ENCODE measurements at regions of chr14 and their contacts with region 1.

Region 1: GRCh38 chr14:68788996-68789820 is 3.7 kb downstream of the ZFP36L1 start:
- DNase-seq: peak; percentile 51 to 93 (median 85)
- ATAC-seq: peak; percentile 12
- H3K4me3 ChIP-seq: peak overlapping the region; percentile 78 to 81
- H3K27ac ChIP-seq: peak overlapping the region; percentile 100
- H3K4me1 ChIP-seq: peaks cover 27 to 58% of the 10 kb centered on the region in 2 donors
- H3K27me3 ChIP-seq: no peaks in the 10 kb centered on the region
- CTCF ChIP-seq: peak; percentile 45 to 66

Region 2: DNA sequence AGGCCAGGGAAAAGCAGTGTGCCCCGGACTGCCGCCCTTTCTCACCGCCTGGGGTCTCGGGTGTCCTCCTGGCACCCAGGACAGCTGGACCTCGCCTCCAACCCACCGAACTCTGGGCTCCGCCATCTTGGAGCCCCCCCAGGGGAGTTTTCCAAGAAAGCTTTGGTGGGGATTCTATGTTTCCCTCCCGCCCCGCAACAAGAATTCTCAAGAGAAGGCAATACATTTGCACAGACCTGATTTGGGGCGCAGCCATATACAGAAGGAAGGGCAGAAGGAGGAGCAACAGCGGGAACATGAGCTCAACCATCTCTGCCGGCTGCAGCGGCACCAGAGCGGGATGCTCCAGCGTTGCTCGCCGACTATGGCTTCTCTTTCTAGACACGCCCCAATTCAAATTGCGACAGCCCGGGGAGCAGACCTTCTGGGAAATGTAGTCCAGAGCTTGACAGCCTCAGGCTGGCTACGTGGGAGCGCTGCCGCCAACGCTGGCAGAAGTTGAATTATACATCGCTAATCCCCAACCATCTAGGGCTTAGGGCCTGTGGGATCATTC is 1093.7 kb before region 1 on chr14 and contains the start of gene RDH11:
- intact Hi-C with region 1: no loop called
- DNase-seq: peak; percentile 87 to 93 (median 92)
- ATAC-seq: peak; percentile 99
- H3K4me3 ChIP-seq: peak within 1 kb of the TSS; percentile 93 to 95
- H3K27ac ChIP-seq: peak within 1 kb of the TSS; percentile 77 to 83
- H3K4me1 ChIP-seq: peaks cover 5 to 19% of the 10 kb centered on the region in 2 donors
- H3K27me3 ChIP-seq: no peaks in the 10 kb centered on the region
- CTCF ChIP-seq: no peak
- polyA plus RNA-seq, gene RDH11: 60.6 to 69.2 (median 66.7) TPM

Region 3: GRCh38 chr14:68685419-68686204 is 103.6 kb before region 1 on chr14:
- intact Hi-C with region 1: loop called in 1 of 2 experiments (anchors 10 kb)
- DNase-seq: no peak
- ATAC-seq: peak; percentile 84
- H3K4me3 ChIP-seq: no peak overlapping the region
- H3K27ac ChIP-seq: peak overlapping the region; percentile 40 to 97
- H3K4me1 ChIP-seq: peaks cover 22 to 68% of the 10 kb centered on the region in 2 donors
- H3K27me3 ChIP-seq: no peaks in the 10 kb centered on the region
- CTCF ChIP-seq: no peak

Region 4: GRCh38 chr14:68727315-68728047 is 61.7 kb before region 1 on chr14:
- intact Hi-C with region 1: no loop called
- DNase-seq: no peak
- ATAC-seq: peak; percentile 67
- H3K4me3 ChIP-seq: no peak overlapping the region
- H3K27ac ChIP-seq: peak overlapping the region in 1 of 2 donors; percentile 34
- H3K4me1 ChIP-seq: peaks cover 4 to 51% of the 10 kb centered on the region in 2 donors
- H3K27me3 ChIP-seq: no peaks in the 10 kb centered on the region
- CTCF ChIP-seq: no peak

Region 5: DNA sequence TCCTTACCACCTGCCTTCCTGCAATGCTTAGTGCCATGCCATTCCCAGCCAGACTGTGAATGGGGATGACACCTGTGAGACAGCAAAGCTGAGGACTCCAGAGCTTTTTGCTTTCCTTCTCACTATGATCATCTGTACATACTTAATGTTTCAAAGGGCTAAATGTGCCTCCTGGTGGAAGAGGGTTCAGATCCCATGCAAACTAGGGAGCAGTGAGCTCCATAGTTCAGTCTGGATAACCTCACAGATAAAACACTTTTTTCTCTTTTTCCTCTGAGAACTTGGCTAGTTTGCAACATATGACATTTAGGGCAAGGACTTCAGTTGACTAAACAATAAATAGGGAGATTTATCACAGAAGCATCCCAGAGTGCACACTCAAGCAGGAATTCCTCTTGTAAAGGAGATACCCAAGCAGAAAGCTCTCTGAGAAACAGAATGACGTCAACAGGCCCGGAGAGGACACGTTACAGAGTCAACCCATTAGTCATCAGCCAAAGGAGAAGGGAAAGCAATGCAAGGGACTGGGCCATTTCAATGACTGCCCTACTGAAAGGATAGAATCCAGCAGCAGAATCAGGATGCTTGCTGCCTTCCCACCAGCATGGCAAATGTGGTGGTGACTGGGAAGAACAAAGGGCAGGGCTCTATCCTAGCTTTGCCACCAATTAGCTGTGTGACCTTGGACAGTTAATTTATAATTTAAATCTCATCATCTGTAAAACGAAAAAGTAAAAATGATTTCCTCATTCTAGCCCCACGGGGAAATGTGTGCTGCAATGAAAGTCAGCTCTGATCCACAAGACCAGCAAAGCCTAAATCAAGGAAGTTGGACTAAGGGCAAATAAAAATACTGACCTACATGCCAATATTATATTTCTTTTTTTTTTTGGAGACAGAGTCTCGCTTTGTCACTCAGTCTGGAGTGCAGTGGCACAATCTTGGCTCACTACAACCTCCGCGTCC is 270.7 kb after region 1 on chr14:
- intact Hi-C with region 1: no loop called
- DNase-seq: no peak
- ATAC-seq: peak; percentile 79
- H3K4me3 ChIP-seq: no peak overlapping the region
- H3K27ac ChIP-seq: peak overlapping the region; percentile 45 to 65
- H3K4me1 ChIP-seq: peaks cover 0 to 38% of the 10 kb centered on the region in 2 donors
- H3K27me3 ChIP-seq: no peaks in the 10 kb centered on the region
- CTCF ChIP-seq: no peak

Measured in left lung (tissue), 14 donors.